ENCODE measurements at regions of chr3 and their contacts with region 1.

Region 1: GRCh38 chr3:136075218-136075808 is 109.8 kb downstream of the PPP2R3A start:
- DNase-seq: no peak
- H3K4me3 ChIP-seq: no peak overlapping the region
- H3K27ac ChIP-seq: no peak overlapping the region
- H3K4me1 ChIP-seq: peaks cover 20 to 29% (median 22%) of the 10 kb centered on the region in 4 donors
- H3K27me3 ChIP-seq: no peaks in the 10 kb centered on the region
- CTCF ChIP-seq: peak in 2 of 3 experiments; percentile 90 to 94
- EP300 ChIP-seq: no peak
- POLR2A ChIP-seq: no peak

Region 2: GRCh38 chr3:136196401-136197158 is 121.3 kb after region 1 on chr3:
- intact Hi-C with region 1: loop called (anchors 5 kb)
- DNase-seq: peak; percentile 99
- H3K4me3 ChIP-seq: peak overlapping the region; percentile 89 to 95 (median 92)
- H3K27ac ChIP-seq: peak overlapping the region; percentile 99 to 100 (median 100)
- H3K4me1 ChIP-seq: peaks cover 20 to 41% (median 32%) of the 10 kb centered on the region in 4 donors
- H3K27me3 ChIP-seq: no peaks in the 10 kb centered on the region
- CTCF ChIP-seq: no peak
- EP300 ChIP-seq: no peak
- POLR2A ChIP-seq: peak; percentile 67

Region 3: DNA sequence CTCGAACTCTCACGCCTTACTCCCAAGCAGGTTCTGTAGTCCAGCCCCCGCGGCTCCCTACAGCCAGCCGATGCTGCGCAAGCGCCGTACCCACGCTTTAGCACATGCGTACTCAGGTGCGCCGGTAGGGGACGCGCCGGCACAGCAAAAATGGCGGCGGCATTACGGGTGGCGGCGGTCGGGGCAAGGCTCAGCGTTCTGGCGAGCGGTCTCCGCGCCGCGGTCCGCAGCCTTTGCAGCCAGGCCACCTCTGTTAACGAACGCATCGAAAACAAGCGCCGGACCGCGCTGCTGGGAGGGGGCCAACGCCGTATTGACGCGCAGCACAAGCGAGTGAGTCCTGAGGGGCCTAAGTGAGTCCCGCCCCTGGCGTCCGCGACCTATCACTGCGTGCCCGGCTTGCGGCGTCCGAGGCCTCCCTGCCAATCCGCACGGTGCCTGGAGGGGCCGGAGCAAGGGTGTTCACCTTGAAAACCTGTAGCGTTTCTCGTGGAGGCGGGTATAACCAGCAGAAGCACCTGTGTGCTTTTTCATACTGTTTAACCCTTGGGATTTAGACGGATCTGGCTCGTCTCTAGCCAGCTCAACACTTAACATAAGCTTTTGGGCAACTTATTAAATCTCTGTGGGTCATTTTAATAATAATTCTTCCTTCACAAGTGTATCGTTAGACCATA is 175.1 kb after region 1 on chr3 and contains the start of gene PCCB:
- intact Hi-C with region 1: loop called (anchors 2 kb)
- DNase-seq: peak; percentile 98
- H3K4me3 ChIP-seq: peak within 1 kb of the TSS; percentile 65 to 87 (median 73)
- H3K27ac ChIP-seq: peak within 1 kb of the TSS; percentile 87 to 94 (median 92)
- H3K4me1 ChIP-seq: peaks cover 20 to 22% (median 21%) of the 10 kb centered on the region in 4 donors
- H3K27me3 ChIP-seq: no peaks in the 10 kb centered on the region
- CTCF ChIP-seq: peak; percentile 68 to 82 (median 76)
- EP300 ChIP-seq: no peak
- POLR2A ChIP-seq: peak; percentile 30
- total RNA-seq, gene PCCB: 25.8 to 35.6 (median 31.4) TPM

Region 4: GRCh38 chr3:136390574-136390973 is 315.3 kb after region 1 on chr3:
- intact Hi-C with region 1: loop called (anchors 5 kb)
- DNase-seq: no peak
- H3K4me3 ChIP-seq: no peak overlapping the region
- H3K27ac ChIP-seq: no peak overlapping the region
- H3K4me1 ChIP-seq: peaks cover 0 to 10% (median 8%) of the 10 kb centered on the region in 4 donors
- H3K27me3 ChIP-seq: no peaks in the 10 kb centered on the region
- CTCF ChIP-seq: no peak
- EP300 ChIP-seq: no peak
- POLR2A ChIP-seq: no peak

Region 5: DNA sequence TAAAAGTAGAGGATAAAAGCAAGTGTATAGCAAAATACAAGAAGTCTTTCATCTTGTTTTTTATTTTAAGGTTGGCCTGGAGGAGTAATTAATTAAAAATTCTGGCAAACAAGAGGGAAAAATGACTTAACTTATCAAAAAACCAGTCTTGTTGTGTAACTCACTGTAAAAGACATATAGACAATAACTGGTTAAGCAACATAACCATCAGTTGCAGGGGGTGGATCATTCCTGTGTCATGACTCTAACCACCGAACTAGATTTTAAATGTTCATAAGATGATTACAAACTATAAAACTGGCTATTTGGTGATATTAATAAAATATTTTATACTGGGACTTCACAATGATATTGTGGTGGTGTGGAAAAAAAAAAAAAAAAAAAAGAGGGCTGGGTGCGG is 546.3 kb after region 1 on chr3:
- intact Hi-C with region 1: no loop called
- DNase-seq: no peak
- H3K4me3 ChIP-seq: no peak overlapping the region
- H3K27ac ChIP-seq: no peak overlapping the region
- H3K4me1 ChIP-seq: peaks cover 2 to 16% (median 8%) of the 10 kb centered on the region in 4 donors
- H3K27me3 ChIP-seq: no peaks in the 10 kb centered on the region
- CTCF ChIP-seq: no peak
- EP300 ChIP-seq: no peak
- POLR2A ChIP-seq: no peak

Region 6: GRCh38 chr3:137013955-137014688 is 938.8 kb after region 1 on chr3:
- intact Hi-C with region 1: loop called (anchors 5 kb)
- DNase-seq: peak; percentile 98
- H3K4me3 ChIP-seq: peak overlapping the region; percentile 48 to 62 (median 52)
- H3K27ac ChIP-seq: peak overlapping the region; percentile 71 to 81 (median 73)
- H3K4me1 ChIP-seq: peaks cover 8 to 12% (median 9%) of the 10 kb centered on the region in 4 donors
- H3K27me3 ChIP-seq: no peaks in the 10 kb centered on the region
- CTCF ChIP-seq: peak; percentile 85 to 96 (median 91)
- EP300 ChIP-seq: no peak
- POLR2A ChIP-seq: no peak

Measured in esophagus muscularis mucosa (tissue), 4 donors.